ENCODE measurements at regions of chr17 and their contacts with region 1.

Region 1: DNA sequence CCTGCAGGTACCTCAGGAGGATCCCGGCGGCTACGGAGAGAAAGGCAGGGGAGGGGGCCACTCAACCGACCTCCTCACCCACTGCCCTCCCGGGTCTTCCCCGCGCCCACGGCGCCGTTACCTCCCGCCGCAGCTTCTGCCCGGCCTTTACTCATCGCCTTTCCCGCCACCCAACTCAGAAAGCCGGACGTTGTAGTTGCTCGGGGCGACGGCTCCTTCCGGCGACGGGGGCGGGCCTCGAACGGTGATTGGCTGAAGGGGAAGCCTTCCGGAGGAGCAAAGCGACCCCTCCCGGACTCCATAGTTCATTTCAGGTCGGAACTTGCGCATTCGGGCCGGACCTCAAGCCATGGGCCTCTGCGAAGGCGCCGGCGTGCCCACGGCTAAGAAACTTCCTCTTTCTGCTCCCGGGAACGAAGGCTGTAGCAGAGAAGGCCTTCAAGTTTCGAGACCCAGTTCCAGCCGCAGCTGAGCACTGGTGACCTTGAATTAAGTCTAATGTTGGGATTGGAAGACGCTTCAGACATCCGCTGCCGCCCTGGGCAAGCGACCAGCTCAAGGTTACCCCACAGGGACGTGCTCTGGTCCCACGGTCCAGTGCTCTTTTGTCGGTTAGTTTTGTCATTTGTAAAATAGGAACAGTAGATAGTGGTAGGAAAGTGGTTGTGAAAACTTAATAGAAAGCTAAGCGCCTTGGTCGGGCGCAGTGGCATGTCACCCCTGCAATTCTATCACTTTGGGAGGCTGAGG is at the start of gene PSMC3IP:
- DNase-seq: peak; percentile 84 to 94
- H3K4me3 ChIP-seq: peak within 1 kb of the TSS; percentile 80 to 99 (median 90)
- H3K27ac ChIP-seq: peak within 1 kb of the TSS; percentile 79
- H3K4me1 ChIP-seq: no peaks in the 10 kb centered on the region
- H3K27me3 ChIP-seq: no peaks in the 10 kb centered on the region
- CTCF ChIP-seq: peak; percentile 44 to 58 (median 57)
- EP300 ChIP-seq: no peak
- POLR2A ChIP-seq: peak; percentile 60 to 76
- RAD21 ChIP-seq: peak in 1 of 2 experiments; percentile 18; a peak in 1 of 4 replicates
- total RNA-seq, gene PSMC3IP: 21.9 and 22.7 TPM in 2 replicates

Region 2: DNA sequence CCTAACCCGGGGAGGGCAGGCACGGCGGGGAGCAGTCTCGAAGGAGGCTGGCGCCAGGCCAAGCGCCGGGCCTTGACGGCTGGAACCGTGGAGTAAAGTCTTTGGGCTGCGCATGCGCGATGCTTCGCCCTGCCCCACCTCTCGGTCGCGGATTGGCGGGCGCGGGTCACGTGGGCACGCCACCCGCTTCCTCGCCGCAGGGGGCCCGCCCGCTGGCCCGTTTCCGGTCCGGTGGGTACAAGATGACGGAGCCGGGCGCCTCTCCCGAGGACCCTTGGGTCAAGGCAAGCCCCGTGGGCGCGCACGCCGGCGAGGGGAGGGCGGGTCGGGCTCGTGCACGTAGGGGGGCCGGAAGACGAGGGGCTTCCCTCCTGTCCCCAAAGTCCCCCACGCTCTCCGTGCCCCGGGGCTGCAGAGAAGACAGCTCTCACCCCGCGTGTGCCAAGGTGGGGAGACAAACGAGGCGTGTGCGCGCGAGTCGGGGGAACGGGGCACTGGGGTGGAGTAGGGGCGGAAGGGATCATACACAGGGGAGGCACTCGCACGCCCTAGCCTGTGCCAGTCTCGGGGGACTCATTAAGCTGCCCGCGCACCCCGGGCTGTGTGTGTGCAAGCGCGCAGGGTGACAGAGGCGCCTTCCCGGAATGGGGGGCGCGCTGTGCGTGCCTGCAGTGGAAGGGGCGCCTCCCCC is 10.7 kb before region 1 on chr17 and contains the start of gene MLX:
- CTCF ChIA-PET with region 1: interaction called, 22 read pairs
- POLR2A ChIA-PET with region 1: interaction called, 74 read pairs
- DNase-seq: peak; percentile 79 to 99
- H3K4me3 ChIP-seq: peak within 1 kb of the TSS; percentile 44 to 81 (median 74)
- H3K27ac ChIP-seq: peak within 1 kb of the TSS; percentile 63
- H3K4me1 ChIP-seq: peaks cover 0 to 21% (median 9%) of the 10 kb centered on the region in 4 experiments; a peak in 5 of 7 replicates
- H3K27me3 ChIP-seq: no peaks in the 10 kb centered on the region
- CTCF ChIP-seq: no peak
- EP300 ChIP-seq: no peak
- POLR2A ChIP-seq: peak in 1 of 2 experiments; percentile 11; a peak in 1 of 3 replicates
- RAD21 ChIP-seq: no peak
- total RNA-seq, gene MLX: 27.5 and 34.2 TPM in 2 replicates

Region 3: GRCh38 chr17:42598905-42599304 is 21.2 kb after region 1 on chr17:
- CTCF ChIA-PET with region 1: interaction called, 16 read pairs
- POLR2A ChIA-PET with region 1: interaction called, 5 read pairs
- DNase-seq: no peak
- H3K4me3 ChIP-seq: no peak overlapping the region
- H3K27ac ChIP-seq: no peak overlapping the region
- H3K4me1 ChIP-seq: no peaks in the 10 kb centered on the region
- H3K27me3 ChIP-seq: no peaks in the 10 kb centered on the region
- CTCF ChIP-seq: no peak
- EP300 ChIP-seq: no peak
- POLR2A ChIP-seq: no peak
- RAD21 ChIP-seq: no peak

Region 4: GRCh38 chr17:42659079-42659931 is 81.6 kb after region 1 on chr17 and contains the start of gene TUBG2:
- CTCF ChIA-PET with region 1: interaction called, 10 read pairs
- POLR2A ChIA-PET with region 1: interaction called, 3 read pairs
- DNase-seq: peak; percentile 89 to 98
- H3K4me3 ChIP-seq: peak within 1 kb of the TSS; percentile 66 to 84 (median 80)
- H3K27ac ChIP-seq: peak within 1 kb of the TSS; percentile 55; the same call in 1 of the 2 replicates
- H3K4me1 ChIP-seq: peaks cover 3 to 11% (median 6%) of the 10 kb centered on the region in 4 experiments; a peak in 5 of 7 replicates
- H3K27me3 ChIP-seq: no peaks in the 10 kb centered on the region
- CTCF ChIP-seq: no peak
- EP300 ChIP-seq: no peak
- POLR2A ChIP-seq: peak in 1 of 2 experiments; percentile 67; a peak in 1 of 3 replicates
- RAD21 ChIP-seq: no peak
- total RNA-seq, gene TUBG2: 13.0 and 14.8 TPM in 2 replicates

Region 5: GRCh38 chr17:42677008-42677857 is 99.5 kb after region 1 on chr17:
- CTCF ChIA-PET with region 1: interaction called, 32 read pairs
- POLR2A ChIA-PET with region 1: interaction called, 12 read pairs
- DNase-seq: peak; percentile 96 to 98
- H3K4me3 ChIP-seq: peak overlapping the region in 3 of 4 experiments; percentile 77 to 82 (median 81); a peak in 7 of 8 replicates
- H3K27ac ChIP-seq: peak overlapping the region; percentile 58
- H3K4me1 ChIP-seq: peaks cover 0 to 50% (median 35%) of the 10 kb centered on the region in 4 experiments; a peak in 6 of 7 replicates
- H3K27me3 ChIP-seq: peaks cover 0 to 40% (median 28%) of the 10 kb centered on the region in 4 experiments; a peak in 6 of 7 replicates
- CTCF ChIP-seq: no peak
- EP300 ChIP-seq: no peak
- POLR2A ChIP-seq: no peak; a peak in 1 of 3 replicates
- RAD21 ChIP-seq: no peak

Region 6: GRCh38 chr17:42760652-42761581 is 183.2 kb after region 1 on chr17 and contains the start of gene RAMP2:
- CTCF ChIA-PET with region 1: interaction called, 16 read pairs
- POLR2A ChIA-PET with region 1: interaction called, 3 read pairs
- DNase-seq: peak in 1 of 2 experiments; percentile 79
- H3K4me3 ChIP-seq: peak within 1 kb of the TSS; percentile 42 to 86 (median 60)
- H3K27ac ChIP-seq: no peak within 1 kb of the TSS
- H3K4me1 ChIP-seq: peaks cover 5 to 17% (median 9%) of the 10 kb centered on the region in 4 experiments
- H3K27me3 ChIP-seq: peaks cover 12 to 28% (median 24%) of the 10 kb centered on the region in 4 experiments
- CTCF ChIP-seq: no peak
- EP300 ChIP-seq: no peak
- POLR2A ChIP-seq: no peak; a peak in 1 of 3 replicates
- RAD21 ChIP-seq: no peak
- total RNA-seq, gene RAMP2: 12.0 and 13.4 TPM in 2 replicates